ENCODE measurements at regions of chr6 and their contacts with region 1.

Region 1: GRCh38 chr6:151451950-151452749 is at the start of gene RMND1:
- DNase-seq: peak; percentile 98 to 100 (median 99)
- H3K4me3 ChIP-seq: peak within 1 kb of the TSS; percentile 85 to 99
- H3K4me3 Mint-ChIP-seq: peak within 1 kb of the TSS; percentile 91 to 98 (median 97)
- H3K27ac ChIP-seq: peak within 1 kb of the TSS; percentile 72
- H3K27ac Mint-ChIP-seq: peak within 1 kb of the TSS; percentile 93 to 99 (median 96)
- H3K4me1 ChIP-seq: peaks cover 32% of the 10 kb centered on the region
- H3K4me1 Mint-ChIP-seq: peaks cover 27 to 68% (median 53%) of the 10 kb centered on the region in 4 donors
- H3K27me3 ChIP-seq: no peaks in the 10 kb centered on the region
- H3K27me3 Mint-ChIP-seq: peaks cover 0 to 2% of the 10 kb centered on the region in 2 donors
- total RNA-seq, gene RMND1: 17.0 to 17.5 TPM

Region 2: GRCh38 chr6:151374036-151374683 is 78.0 kb before region 1 on chr6:
- CTCF ChIA-PET with region 1: no interaction called
- POLR2A ChIA-PET with region 1: interaction called, 15 read pairs
- intact Hi-C with region 1: no loop called
- DNase-seq: peak in 1 of 5 donors; percentile 48
- H3K4me3 ChIP-seq: no peak overlapping the region
- H3K4me3 Mint-ChIP-seq: peak overlapping the region; percentile 64 to 83 (median 76)
- H3K27ac ChIP-seq: peak overlapping the region; percentile 60
- H3K27ac Mint-ChIP-seq: peak overlapping the region; percentile 83 to 96 (median 89)
- H3K4me1 ChIP-seq: peaks cover 73% of the 10 kb centered on the region
- H3K4me1 Mint-ChIP-seq: peaks cover 58 to 80% (median 66%) of the 10 kb centered on the region in 4 donors
- H3K27me3 ChIP-seq: no peaks in the 10 kb centered on the region
- H3K27me3 Mint-ChIP-seq: no peaks in the 10 kb centered on the region

Region 3: DNA sequence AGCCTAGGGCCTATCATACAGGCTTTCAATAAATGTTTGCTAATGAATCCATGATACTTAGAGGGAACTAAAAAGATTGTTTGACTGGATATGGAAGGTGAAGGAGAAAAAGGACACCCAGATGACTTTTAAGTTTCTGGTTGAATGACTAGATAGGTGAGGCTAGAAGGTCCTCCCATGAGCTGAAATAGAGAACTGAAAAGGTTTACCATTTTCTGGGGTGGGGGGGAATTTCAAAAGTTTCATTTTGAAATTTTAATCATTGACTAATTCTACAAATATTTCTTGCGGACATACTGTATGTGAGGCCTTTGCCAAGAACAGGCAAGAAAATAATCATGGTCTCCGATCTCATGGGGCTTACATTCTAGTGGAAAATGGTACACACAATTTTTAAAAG is 42.9 kb before region 1 on chr6:
- CTCF ChIA-PET with region 1: interaction called, 15 read pairs
- POLR2A ChIA-PET with region 1: interaction called, 11 read pairs
- intact Hi-C with region 1: loop called (anchors 1 kb)
- DNase-seq: no peak
- H3K4me3 ChIP-seq: no peak overlapping the region
- H3K4me3 Mint-ChIP-seq: no peak overlapping the region
- H3K27ac ChIP-seq: no peak overlapping the region
- H3K27ac Mint-ChIP-seq: peak overlapping the region in 5 of 7 donors; percentile 3 to 79 (median 60)
- H3K4me1 ChIP-seq: peaks cover 16% of the 10 kb centered on the region
- H3K4me1 Mint-ChIP-seq: peaks cover 22 to 33% (median 29%) of the 10 kb centered on the region in 4 donors
- H3K27me3 ChIP-seq: no peaks in the 10 kb centered on the region
- H3K27me3 Mint-ChIP-seq: no peaks in the 10 kb centered on the region

Region 4: GRCh38 chr6:151440930-151441329 is 11.2 kb before region 1 on chr6:
- CTCF ChIA-PET with region 1: interaction called, 17 read pairs
- POLR2A ChIA-PET with region 1: interaction called, 15 read pairs
- intact Hi-C with region 1: no loop called
- DNase-seq: peak in 4 of 5 donors; percentile 11 to 32 (median 18)
- H3K4me3 ChIP-seq: no peak overlapping the region
- H3K4me3 Mint-ChIP-seq: peak overlapping the region in 1 of 8 donors; percentile 17
- H3K27ac ChIP-seq: no peak overlapping the region
- H3K27ac Mint-ChIP-seq: no peak overlapping the region
- H3K4me1 ChIP-seq: peaks cover 16% of the 10 kb centered on the region
- H3K4me1 Mint-ChIP-seq: peaks cover 27 to 54% (median 35%) of the 10 kb centered on the region in 4 donors
- H3K27me3 ChIP-seq: no peaks in the 10 kb centered on the region
- H3K27me3 Mint-ChIP-seq: no peaks in the 10 kb centered on the region

Region 5: GRCh38 chr6:151482290-151482689 is 30.1 kb after region 1 on chr6:
- CTCF ChIA-PET with region 1: no interaction called
- POLR2A ChIA-PET with region 1: interaction called, 18 read pairs
- intact Hi-C with region 1: no loop called
- DNase-seq: peak; percentile 11 to 53 (median 23)
- H3K4me3 ChIP-seq: peak overlapping the region in 1 of 2 donors; percentile 8
- H3K4me3 Mint-ChIP-seq: peak overlapping the region; percentile 80 to 94 (median 90)
- H3K27ac ChIP-seq: peak overlapping the region; percentile 46
- H3K27ac Mint-ChIP-seq: peak overlapping the region; percentile 75 to 99 (median 97)
- H3K4me1 ChIP-seq: peaks cover 23% of the 10 kb centered on the region
- H3K4me1 Mint-ChIP-seq: peaks cover 19 to 22% (median 21%) of the 10 kb centered on the region in 4 donors
- H3K27me3 ChIP-seq: no peaks in the 10 kb centered on the region
- H3K27me3 Mint-ChIP-seq: peaks cover 0 to 2% of the 10 kb centered on the region in 2 donors

Region 6: GRCh38 chr6:152301764-152302568 is 849.8 kb after region 1 on chr6:
- CTCF ChIA-PET with region 1: no interaction called
- POLR2A ChIA-PET with region 1: interaction called, 3 read pairs
- intact Hi-C with region 1: loop called (anchors 1 kb)
- DNase-seq: peak; percentile 88 to 92 (median 90)
- H3K4me3 ChIP-seq: peak overlapping the region; percentile 78 to 85
- H3K4me3 Mint-ChIP-seq: peak overlapping the region; percentile 99 to 100 (median 100)
- H3K27ac ChIP-seq: peak overlapping the region; percentile 87
- H3K27ac Mint-ChIP-seq: peak overlapping the region; percentile 95 to 100 (median 98)
- H3K4me1 ChIP-seq: peaks cover 40% of the 10 kb centered on the region
- H3K4me1 Mint-ChIP-seq: peaks cover 29 to 47% (median 36%) of the 10 kb centered on the region in 4 donors
- H3K27me3 ChIP-seq: no peaks in the 10 kb centered on the region
- H3K27me3 Mint-ChIP-seq: no peaks in the 10 kb centered on the region

Region 7: DNA sequence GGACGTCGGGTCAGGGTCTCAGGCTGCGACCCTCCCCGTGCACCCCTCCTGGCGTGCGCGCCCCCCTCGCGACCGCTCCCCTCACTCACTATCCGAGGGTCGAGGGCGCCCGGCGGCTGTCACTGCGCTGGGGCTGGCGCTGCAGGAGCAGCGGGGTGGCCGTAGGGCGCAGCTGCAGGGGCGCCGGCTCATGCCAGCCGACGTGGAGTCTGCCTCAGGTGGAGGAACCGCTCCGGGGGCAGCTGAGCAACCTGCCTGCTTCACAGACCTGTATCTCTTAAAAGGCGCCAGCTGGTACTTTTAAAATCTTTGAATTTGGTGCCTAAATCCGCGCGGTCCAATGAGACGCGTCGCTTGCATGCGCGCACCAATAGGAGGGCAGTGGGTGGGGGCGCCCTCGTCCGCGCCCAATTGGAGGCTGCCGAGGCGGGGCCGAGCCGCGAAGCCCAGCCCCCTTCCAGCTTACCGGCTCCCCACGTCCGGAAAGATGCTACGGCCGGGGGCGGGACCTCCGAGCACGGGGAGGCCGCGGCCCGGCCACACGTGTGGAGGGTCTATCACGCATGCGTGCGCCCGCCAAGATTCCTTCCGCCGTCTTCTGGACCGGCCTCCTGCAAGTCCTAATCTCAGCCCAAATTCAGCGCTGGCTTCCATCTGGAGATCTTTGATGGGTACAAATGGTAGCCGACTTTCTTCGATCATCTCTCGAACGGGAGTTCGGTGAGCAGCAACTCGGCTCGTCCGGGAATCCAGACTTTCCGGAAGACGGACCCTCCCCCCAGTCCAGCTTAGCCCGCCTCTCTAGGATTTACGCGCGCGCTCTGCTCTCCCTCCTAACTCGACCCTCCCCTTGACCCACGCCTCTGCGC is 1530.9 kb after region 1 on chr6 and contains the start of gene FBXO5:
- CTCF ChIA-PET with region 1: no interaction called
- POLR2A ChIA-PET with region 1: interaction called, 5 read pairs
- intact Hi-C with region 1: loop called (anchors 2 kb)
- DNase-seq: peak; percentile 96 to 98 (median 97)
- H3K4me3 ChIP-seq: peak within 1 kb of the TSS; percentile 64 to 82
- H3K4me3 Mint-ChIP-seq: peak within 1 kb of the TSS; percentile 96 to 99 (median 98)
- H3K27ac ChIP-seq: peak within 1 kb of the TSS; percentile 87
- H3K27ac Mint-ChIP-seq: peak within 1 kb of the TSS; percentile 97 to 99 (median 99)
- H3K4me1 ChIP-seq: peaks cover 43% of the 10 kb centered on the region
- H3K4me1 Mint-ChIP-seq: peaks cover 34 to 66% (median 45%) of the 10 kb centered on the region in 4 donors
- H3K27me3 ChIP-seq: no peaks in the 10 kb centered on the region
- H3K27me3 Mint-ChIP-seq: no peaks in the 10 kb centered on the region
- total RNA-seq, gene FBXO5: 9.9 to 10.4 TPM